PC-9 (cell line): ENCODE measurements at regions of chr3 and their contacts with region 1.

Region 1: DNA sequence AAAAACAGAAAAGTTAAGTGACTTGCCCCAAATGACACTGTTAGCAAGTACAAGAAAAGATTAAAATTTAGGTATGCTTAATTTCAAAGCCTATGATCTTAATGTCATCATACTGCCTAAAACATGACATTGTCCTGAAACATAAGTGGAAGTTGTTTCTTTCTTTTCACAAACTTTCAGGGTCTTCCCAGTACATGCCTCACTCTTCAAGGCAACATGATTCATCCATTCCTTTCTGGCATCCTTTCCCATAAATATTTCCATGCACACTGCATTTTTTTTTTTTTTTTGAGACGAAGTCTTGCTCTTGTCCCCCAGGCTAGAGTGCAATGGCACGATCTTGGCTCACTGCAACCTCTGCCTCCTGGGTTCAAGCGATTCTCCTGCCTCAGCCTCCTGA is 42.5 kb upstream of the KPNA4 start:
- DNase-seq: no peak
- H3K4me3 ChIP-seq: no peak overlapping the region
- H3K27ac ChIP-seq: no peak overlapping the region
- H3K4me1 ChIP-seq: no peaks in the 10 kb centered on the region
- H3K27me3 ChIP-seq: no peaks in the 10 kb centered on the region
- CTCF ChIP-seq: no peak

Region 2: GRCh38 chr3:160622263-160623045 is 14.6 kb after region 1 on chr3:
- CTCF ChIA-PET with region 1: interaction called, 18 read pairs
- POLR2A ChIA-PET with region 1: no interaction called
- intact Hi-C with region 1: no loop called
- DNase-seq: no peak
- H3K4me3 ChIP-seq: no peak overlapping the region
- H3K27ac ChIP-seq: no peak overlapping the region
- H3K4me1 ChIP-seq: peaks cover 17% of the 10 kb centered on the region
- H3K27me3 ChIP-seq: no peaks in the 10 kb centered on the region
- CTCF ChIP-seq: no peak